ENCODE measurements at regions of chr5 and their contacts with region 1.

Region 1: DNA sequence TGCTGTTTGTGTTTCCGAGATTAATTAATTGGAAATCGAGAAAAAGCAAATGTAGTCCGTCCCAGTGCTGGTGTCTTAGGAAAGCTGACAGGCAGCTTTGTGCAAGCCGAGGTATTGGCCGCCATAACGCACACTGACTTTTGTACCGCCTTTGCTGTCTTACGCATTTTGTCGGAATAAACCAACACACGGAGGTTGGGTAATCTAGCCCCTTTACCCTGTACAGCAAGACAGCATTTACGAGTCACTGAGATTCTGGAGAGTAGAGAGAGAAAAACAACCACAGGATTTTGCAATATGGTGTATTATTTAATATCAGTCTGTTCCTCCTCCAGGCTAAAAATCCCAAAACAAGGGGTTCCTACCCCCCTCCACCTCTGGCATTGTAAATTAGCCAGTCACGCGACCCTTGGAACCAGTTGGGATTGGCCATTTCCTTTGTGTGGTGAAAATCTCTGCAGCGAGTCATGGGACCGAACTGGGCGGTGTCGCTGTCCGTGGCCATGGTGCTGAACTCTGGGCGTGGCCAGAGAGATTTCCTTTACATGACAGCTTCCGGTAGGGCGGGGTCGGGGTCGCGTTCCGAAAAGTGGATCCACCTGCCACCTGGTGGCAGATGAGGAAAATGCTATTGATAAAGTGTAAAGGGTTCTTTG is 10.3 kb upstream of the PCDHB1 start:
- DNase-seq: peak; percentile 95
- ATAC-seq: peak; percentile 79
- H3K4me3 ChIP-seq: peak overlapping the region; percentile 82
- H3K27ac ChIP-seq: peak overlapping the region; percentile 79
- H3K4me1 ChIP-seq: peaks cover 9% of the 10 kb centered on the region
- H3K27me3 ChIP-seq: no peaks in the 10 kb centered on the region
- CTCF ChIP-seq: peak; percentile 84

Region 2: DNA sequence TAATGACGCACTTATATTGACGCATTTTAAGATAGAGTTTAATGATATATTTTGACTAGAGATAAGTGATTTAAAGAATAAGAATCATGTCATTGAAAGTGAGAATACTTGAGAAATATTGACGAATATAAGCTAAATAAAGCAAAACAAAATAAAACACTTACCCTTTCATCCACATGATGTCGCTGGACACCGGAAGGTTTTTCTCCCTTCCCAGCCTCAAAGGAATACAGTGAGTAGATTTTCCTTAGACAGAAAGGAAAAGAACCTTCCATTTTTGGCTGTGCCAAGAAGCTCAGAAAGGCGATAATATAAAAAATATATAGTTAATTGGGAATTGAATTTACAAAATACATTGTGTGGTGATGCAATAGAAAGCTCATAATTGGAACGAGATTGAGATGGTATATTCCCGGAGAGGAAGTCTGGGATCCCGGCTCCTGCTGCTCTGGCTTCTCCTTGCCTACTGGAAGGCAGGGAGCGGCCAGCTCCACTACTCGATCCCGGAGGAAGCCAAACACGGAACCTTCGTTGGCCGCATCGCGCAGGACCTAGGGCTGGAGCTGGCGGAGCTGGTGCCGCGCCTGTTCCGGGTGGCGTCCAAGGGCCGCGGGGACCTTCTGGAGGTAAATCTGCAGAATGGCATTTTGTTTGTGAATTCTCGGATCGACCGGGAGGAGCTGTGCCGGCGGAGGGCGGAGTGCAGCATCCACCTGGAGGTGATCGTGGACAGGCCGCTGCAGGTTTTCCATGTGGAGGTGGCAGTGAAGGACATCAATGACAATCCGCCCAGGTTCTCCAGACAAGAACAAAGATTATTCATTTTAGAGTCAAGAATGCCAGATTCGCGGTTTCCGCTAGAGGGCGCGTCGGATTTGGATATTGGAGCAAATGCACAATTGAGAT is 219.3 kb before region 1 on chr5 and contains the start of gene PCDHA5:
- CTCF ChIA-PET with region 1: interaction called, 8 read pairs
- POLR2A ChIA-PET with region 1: no interaction called
- intact Hi-C with region 1: loop called (anchors 1 kb)
- DNase-seq: peak; percentile 83
- ATAC-seq: peak; percentile 82
- H3K4me3 ChIP-seq: peak within 1 kb of the TSS; percentile 76
- H3K27ac ChIP-seq: no peak within 1 kb of the TSS
- H3K4me1 ChIP-seq: no peaks in the 10 kb centered on the region
- H3K27me3 ChIP-seq: no peaks in the 10 kb centered on the region
- CTCF ChIP-seq: peak; percentile 69
- total RNA-seq, gene PCDHA5: 1.3 and 1.5 TPM in 2 replicates

Region 3: DNA sequence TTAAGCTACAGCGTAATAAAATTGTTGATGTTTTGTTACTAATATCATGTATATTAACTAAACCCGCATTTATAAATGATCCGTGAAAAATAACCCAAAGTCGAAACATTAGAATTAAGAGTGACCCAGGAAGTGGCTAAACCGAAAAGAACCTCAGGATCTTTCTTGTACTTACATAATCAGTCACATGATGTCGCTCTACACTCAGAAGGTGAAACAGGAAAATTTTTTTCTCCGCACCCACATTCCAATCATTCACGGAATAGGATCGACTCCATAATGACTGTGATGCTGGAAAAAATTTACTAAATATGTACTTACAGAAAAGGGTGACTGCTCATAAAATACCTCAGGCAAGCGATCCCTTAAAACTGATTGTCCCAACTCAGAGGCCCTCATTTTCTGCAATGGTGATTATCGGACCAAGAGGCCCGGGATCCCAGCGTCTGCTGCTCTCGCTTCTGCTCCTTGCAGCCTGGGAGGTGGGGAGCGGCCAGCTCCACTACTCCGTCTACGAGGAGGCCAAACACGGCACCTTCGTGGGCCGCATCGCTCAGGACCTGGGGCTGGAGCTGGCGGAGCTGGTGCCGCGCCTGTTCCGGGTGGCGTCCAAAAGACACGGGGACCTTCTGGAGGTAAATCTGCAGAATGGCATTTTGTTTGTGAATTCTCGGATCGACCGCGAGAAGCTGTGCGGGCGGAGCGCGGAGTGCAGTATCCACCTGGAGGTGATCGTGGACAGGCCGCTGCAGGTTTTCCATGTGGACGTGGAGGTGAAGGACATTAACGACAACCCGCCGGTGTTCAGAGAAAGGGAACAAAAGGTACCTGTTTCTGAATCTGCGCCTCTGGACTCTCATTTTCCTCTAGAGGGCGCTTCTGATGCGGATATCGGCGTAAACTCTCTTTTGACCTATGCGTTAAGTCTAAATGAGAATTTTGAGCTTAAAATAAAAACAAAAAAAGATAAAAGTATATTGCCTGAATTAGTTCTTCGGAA is 165.5 kb before region 1 on chr5 and contains the start of gene PCDHA12:
- CTCF ChIA-PET with region 1: interaction called, 17 read pairs
- POLR2A ChIA-PET with region 1: no interaction called
- intact Hi-C with region 1: loop called (anchors 1 kb)
- DNase-seq: peak; percentile 82
- ATAC-seq: peak; percentile 80
- H3K4me3 ChIP-seq: peak within 1 kb of the TSS; percentile 86
- H3K27ac ChIP-seq: peak within 1 kb of the TSS; percentile 42; the same call in 1 of the 2 replicates
- H3K4me1 ChIP-seq: peaks cover 14% of the 10 kb centered on the region
- H3K27me3 ChIP-seq: no peaks in the 10 kb centered on the region
- CTCF ChIP-seq: peak; percentile 67
- total RNA-seq, gene PCDHA12: 7.0 and 8.2 TPM in 2 replicates

Region 4: GRCh38 chr5:140926443-140927227 is 114.3 kb before region 1 on chr5:
- CTCF ChIA-PET with region 1: interaction called, 66 read pairs
- POLR2A ChIA-PET with region 1: no interaction called
- intact Hi-C with region 1: loop called (anchors 1 kb)
- DNase-seq: peak; percentile 82
- ATAC-seq: peak; percentile 92
- H3K4me3 ChIP-seq: peak overlapping the region; percentile 91
- H3K27ac ChIP-seq: peak overlapping the region; percentile 45
- H3K4me1 ChIP-seq: peaks cover 8% of the 10 kb centered on the region
- H3K27me3 ChIP-seq: no peaks in the 10 kb centered on the region
- CTCF ChIP-seq: peak; percentile 76

Region 5: DNA sequence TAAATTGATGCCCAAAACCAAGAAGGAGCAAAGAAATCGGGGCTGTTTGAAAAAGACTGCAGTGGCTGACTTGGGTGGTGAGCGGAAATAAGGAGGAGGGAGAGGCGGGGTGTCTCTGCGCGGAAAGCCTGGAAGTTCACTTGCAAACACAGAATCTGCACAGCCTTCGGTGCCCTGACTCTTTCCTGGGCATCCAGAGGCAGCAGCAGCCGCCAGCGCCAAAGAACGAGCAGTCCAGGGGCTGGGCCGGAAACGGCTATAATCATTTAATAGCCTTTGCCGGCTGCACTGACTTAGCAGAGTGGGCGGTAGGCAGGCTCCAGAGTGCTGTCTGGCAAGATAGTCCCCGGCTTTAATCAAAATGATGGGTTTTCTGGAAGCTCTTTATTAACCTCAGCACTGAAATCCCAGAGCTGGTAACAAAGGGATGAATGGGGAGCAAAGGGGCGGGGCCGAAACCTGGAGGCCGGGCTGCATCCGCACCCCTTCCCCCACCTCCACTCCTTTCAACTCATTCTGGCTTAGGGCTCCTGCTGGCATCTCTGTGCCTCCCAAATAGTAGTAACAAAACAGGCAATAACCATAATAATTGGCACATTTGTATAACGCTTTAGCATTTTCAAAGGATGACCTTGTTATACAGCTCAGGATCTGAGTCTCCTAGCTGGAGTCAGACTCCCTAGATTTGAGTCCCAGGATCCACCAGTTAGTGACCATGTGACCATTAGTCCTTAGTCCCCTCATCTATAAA is 38.9 kb before region 1 on chr5:
- CTCF ChIA-PET with region 1: interaction called, 10 read pairs
- POLR2A ChIA-PET with region 1: interaction called, 3 read pairs
- intact Hi-C with region 1: loop called (anchors 1 kb)
- DNase-seq: peak; percentile 48
- ATAC-seq: peak; percentile 47
- H3K4me3 ChIP-seq: peak overlapping the region; percentile 66
- H3K27ac ChIP-seq: peak overlapping the region; percentile 90
- H3K4me1 ChIP-seq: peaks cover 39% of the 10 kb centered on the region
- H3K27me3 ChIP-seq: no peaks in the 10 kb centered on the region
- CTCF ChIP-seq: no peak

Region 6: GRCh38 chr5:141223112-141223783 is 182.3 kb after region 1 on chr5 and contains the start of gene PCDHB14:
- CTCF ChIA-PET with region 1: no interaction called
- POLR2A ChIA-PET with region 1: no interaction called
- intact Hi-C with region 1: no loop called
- DNase-seq: peak; percentile 43
- ATAC-seq: no peak
- H3K4me3 ChIP-seq: peak within 1 kb of the TSS; percentile 52
- H3K27ac ChIP-seq: no peak within 1 kb of the TSS
- H3K4me1 ChIP-seq: no peaks in the 10 kb centered on the region
- H3K27me3 ChIP-seq: no peaks in the 10 kb centered on the region
- CTCF ChIP-seq: peak; percentile 47
- total RNA-seq, gene PCDHB14: 0.58 and 0.87 TPM in 2 replicates